PC-9 (cell line): ENCODE measurements at regions of chr20 and their contacts with region 1.

Region 1: DNA sequence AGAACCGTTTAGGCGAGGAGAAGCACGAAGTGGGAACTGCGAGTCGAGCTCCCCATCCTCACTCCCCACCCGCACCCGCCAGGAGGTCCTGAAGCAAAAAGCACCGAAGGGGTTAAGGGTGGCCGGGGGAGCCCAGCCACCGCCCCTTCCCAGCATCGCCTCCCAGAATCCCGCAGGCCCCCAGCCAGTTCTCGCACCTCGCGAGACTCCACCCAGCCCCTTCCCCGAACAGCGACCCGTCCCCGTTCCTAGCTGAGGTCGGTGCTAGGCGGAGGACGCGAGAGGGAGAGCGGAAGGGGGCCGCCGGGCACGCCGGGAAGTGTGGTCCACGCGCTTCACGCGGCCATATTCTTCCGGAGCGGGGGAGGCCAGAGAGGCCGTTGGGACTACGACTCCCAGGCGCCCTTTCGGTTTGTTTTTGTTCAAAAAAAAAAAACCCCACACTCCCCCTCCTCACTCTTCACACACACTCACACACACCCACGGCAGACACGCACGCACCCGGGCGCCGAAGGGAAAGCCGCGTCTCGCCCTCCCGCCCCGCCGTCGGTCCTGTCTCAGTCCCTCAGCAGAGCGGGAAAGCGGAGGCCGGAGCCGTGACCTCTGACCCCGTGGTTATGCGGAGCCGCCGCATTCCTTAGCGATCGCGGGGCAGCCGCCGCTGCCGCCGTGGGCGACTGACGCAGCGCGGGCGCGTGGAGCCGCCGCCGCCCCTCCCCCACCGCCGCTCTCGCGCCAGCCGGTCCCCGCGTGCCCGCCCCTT is at the start of gene ASXL1:
- DNase-seq: peak; percentile 86 to 99
- H3K4me3 ChIP-seq: peak within 1 kb of the TSS; percentile 78
- H3K27ac ChIP-seq: peak within 1 kb of the TSS; percentile 72
- H3K4me1 ChIP-seq: peaks cover 49% of the 10 kb centered on the region
- H3K27me3 ChIP-seq: no peaks in the 10 kb centered on the region
- CTCF ChIP-seq: no peak
- total RNA-seq, gene ASXL1: 102 and 123 TPM in 2 replicates

Region 2: DNA sequence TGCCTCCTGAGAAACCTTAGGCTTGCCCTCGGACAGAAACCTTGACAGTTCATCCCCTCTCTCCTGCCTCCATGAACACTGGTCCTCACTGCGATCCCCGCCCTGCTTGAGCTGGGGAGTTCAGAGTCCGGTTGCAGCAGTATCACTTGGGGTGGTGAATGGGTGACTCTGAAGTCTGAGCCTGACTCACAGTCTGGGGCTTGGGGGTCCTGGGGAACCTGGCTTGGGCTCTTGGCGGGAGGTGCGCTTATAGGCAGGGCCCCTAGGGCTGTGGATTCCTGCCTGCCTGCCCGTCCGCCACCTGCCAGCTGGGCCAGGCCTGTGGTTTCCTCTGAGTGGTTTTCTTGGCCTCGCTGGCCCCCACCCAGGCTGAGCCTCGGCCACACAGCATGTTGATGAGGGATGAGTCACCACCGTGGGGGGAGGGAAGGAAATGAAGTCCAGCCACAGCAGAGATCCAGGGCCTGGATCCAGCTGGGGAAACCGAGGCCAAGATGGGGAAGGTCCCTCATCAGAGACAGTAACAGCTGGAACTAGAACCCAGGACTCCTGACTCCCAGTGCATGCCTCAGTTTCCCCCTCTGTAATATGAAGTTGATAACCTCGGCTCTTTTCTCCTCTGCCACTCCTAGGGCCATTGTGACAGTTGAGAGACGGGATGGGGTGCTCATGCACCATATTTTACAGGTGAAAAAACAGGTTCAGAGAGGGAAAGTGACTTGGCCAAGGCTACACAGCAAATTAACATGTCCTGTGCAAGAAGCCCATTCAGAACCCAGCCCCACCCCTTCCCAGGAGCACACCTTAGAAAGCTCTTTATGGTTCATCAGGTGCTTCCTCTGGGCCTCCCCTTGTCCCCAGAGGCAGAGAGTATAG is 521.8 kb before region 1 on chr20:
- CTCF ChIA-PET with region 1: no interaction called
- POLR2A ChIA-PET with region 1: no interaction called
- intact Hi-C with region 1: no loop called
- DNase-seq: peak; percentile 72 to 94
- H3K4me3 ChIP-seq: no peak overlapping the region
- H3K27ac ChIP-seq: no peak overlapping the region
- H3K4me1 ChIP-seq: peaks cover 12% of the 10 kb centered on the region
- H3K27me3 ChIP-seq: no peaks in the 10 kb centered on the region
- CTCF ChIP-seq: no peak

Region 3: GRCh38 chr20:32277361-32278198 is 80.5 kb before region 1 on chr20 and contains the start of gene KIF3B:
- CTCF ChIA-PET with region 1: no interaction called
- POLR2A ChIA-PET with region 1: no interaction called
- intact Hi-C with region 1: loop called (anchors 5 kb)
- DNase-seq: peak; percentile 72 to 90
- H3K4me3 ChIP-seq: peak within 1 kb of the TSS; percentile 98
- H3K27ac ChIP-seq: no peak within 1 kb of the TSS
- H3K4me1 ChIP-seq: peaks cover 7% of the 10 kb centered on the region; the same call in 1 of the 2 replicates
- H3K27me3 ChIP-seq: no peaks in the 10 kb centered on the region
- CTCF ChIP-seq: no peak
- total RNA-seq, gene KIF3B: 41.4 and 52.3 TPM in 2 replicates

Region 4: DNA sequence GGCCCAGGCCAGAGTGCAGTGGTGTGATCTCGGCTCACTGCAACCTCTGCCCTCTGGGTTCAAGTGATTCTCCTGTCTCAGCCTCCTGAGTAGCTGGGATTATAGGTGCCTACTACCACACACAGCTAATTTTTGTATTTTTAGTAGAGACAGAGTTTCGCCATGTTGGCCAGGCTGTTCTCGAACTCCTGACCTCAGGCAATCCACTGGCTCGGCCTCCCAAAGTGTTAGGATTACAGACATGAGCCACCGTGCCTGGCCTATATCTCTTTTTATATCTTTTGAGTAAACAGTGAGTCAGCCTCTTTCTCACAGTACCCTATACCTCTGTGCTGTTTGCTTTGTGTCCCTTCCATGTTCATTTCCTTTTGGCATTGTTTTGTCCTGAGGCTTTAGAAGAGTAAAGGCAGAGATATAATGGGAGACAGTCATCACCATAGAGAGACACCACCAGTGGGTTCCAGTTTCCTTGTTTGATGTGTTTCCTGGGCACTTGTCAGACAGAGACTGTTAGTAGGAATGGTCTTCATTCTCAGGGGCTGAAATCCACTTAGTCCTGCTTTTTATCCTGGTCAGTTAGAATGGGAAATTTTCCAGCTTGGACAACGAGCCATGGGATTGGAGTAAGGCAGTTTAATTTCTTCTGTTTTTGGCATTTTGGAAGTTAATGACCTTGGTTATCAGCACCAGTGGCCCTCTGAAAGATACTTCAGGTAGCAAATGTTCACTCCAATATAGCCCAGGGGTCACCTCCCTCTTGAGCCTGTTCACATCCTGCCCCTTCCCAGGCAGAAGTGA is 32.1 kb before region 1 on chr20:
- CTCF ChIA-PET with region 1: no interaction called
- POLR2A ChIA-PET with region 1: no interaction called
- intact Hi-C with region 1: loop called (anchors 2 kb)
- DNase-seq: peak; percentile 63 to 95
- H3K4me3 ChIP-seq: no peak overlapping the region
- H3K27ac ChIP-seq: peak overlapping the region; percentile 56
- H3K4me1 ChIP-seq: peaks cover 15% of the 10 kb centered on the region
- H3K27me3 ChIP-seq: no peaks in the 10 kb centered on the region
- CTCF ChIP-seq: no peak

Region 5: DNA sequence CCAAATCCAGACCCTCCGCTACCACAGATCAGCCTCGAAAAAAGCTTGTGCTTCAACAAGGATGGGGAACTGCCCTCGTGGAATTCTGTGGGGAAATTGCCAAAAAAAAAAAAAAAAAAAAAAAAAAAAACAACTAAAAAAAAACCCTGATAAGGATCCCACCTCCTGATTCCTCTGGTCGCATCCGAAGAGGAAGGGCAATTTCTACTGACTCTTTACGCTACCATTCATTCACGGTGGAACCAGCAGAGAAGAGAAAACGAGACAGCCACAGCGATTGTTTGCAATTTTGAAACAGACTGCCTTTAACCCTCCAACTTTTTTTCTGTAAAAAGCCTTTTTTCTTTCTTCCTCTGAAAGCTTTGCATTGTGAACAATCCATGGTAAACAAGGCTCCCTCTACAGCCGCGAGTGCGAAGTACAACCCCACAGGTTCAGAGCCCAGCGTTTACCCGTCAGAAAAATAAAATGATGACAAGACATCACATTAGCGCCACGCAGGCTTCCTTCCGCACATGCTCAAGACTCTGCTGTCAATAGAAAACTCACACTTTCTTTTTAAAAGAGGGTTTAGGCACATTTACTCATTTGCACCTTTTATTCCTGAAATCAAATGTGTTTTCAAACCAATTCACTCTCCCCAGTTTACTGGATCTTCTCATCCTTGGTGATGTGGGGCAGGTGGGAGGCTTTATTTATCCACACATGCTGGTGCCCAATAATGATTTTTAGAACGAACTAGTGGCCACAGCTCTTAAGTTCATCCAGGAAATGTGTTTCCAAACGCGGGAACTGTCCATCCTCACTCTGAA is 127.1 kb after region 1 on chr20:
- CTCF ChIA-PET with region 1: no interaction called
- POLR2A ChIA-PET with region 1: interaction called, 5 read pairs
- intact Hi-C with region 1: loop called (anchors 2 kb)
- DNase-seq: peak; percentile 59 to 72
- H3K4me3 ChIP-seq: peak overlapping the region; percentile 82
- H3K27ac ChIP-seq: peak overlapping the region; percentile 41; the same call in 1 of the 2 replicates
- H3K4me1 ChIP-seq: peaks cover 13% of the 10 kb centered on the region
- H3K27me3 ChIP-seq: no peaks in the 10 kb centered on the region
- CTCF ChIP-seq: peak; percentile 83